ENCODE measurements at regions of chr11 and their contacts with region 1.

Region 1: DNA sequence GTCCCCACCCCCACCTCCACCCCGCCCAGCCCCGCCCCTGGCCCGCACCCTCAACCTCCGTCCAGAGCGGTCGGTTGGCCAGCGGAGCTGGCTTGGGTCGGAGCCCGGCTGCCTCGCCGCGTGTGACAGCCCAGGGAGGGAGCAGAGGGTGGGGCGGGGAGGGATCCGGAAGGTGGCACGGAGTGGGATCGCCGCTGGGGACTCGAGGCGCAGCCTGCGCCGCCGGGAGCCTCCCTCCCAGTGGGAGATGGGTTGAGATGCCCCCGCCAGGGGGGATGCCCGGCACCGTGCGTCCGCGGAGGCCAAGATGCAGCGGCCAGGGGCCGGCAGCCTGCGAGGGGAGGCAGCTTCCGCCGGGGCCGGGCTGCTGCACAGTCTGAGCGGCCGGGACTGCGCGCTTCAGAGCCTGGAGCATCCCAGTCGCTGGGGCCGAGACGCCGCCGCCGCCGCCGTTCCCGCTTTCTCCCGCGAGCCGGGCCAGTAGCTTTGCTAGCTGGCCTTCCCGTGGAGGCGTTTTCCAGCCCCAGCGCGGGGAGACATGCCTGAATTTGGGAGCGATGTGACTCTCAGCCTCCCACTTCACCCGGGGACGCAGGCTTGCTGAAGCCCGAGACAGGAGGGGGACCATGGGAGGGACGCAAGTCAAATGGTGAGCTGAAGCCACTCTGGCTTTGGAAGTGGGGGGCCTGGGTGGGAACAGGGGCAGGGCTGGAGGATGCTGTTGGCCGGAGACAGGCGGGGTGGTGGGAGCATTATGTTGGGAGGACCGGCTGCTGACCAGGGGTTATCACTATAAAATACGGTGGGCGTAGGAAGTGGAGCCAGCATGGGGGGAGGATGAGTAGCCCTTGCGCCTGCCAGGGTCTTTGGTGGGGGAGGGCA is 40.2 kb downstream of the DIXDC1 start:
- DNase-seq: peak; percentile 63

Region 2: GRCh38 chr11:111905411-111905810 is 72.0 kb before region 1 on chr11:
- CTCF ChIA-PET with region 1: no interaction called
- POLR2A ChIA-PET with region 1: no interaction called
- DNase-seq: no peak

Region 3: GRCh38 chr11:111938687-111939160 is 38.7 kb before region 1 on chr11:
- CTCF ChIA-PET with region 1: interaction called, 5 read pairs
- POLR2A ChIA-PET with region 1: interaction called, 11 read pairs
- DNase-seq: no peak